Head of caudate nucleus (tissue), 42 donors: ENCODE measurements at regions of chr7 and their contacts with region 1.

Region 1: DNA sequence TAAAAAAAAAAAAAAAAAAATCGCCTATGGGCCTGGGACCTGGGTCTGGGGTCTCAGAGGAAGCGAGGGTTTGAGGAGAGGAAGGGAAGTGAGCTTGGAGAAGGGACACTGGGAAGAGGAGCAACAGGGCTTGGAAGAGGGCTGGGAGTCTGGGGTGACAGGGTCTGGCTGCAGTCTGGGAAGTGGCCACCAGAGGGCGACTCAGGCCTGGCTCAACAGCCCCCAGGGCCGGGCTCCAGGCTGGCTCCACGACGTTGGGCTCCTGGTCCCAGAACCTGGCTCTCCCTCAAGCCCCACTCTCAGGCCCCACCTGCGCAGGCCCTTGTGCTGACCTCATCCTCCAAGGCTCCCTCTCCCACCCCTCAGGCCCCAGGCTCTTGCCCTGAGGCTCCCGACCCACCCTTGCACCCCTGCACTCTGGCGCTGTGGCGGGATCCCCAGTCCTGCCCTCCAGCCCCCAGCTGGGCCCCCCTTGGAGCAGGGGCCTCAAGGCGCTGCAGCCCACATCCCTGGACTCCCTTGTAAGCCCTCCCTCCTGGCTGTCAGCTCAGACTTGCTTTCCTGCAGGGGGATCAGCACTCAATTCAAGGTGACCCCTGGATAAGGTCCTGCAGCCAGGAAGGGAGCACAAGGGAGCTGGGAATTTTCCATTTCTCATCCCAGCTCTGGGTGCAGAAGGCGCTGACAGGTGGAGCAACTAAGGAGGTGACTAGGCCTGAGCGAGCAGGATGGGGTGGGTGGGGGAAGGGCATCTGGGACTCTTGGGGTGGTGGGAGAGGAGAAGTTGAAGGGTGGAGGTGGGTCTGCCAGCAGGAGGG is 5.4 kb upstream of the SPACDR start:
- DNase-seq: peak; percentile 77 to 98 (median 92)

Region 2: GRCh38 chr7:100380196-100380595 is 89.2 kb before region 1 on chr7:
- intact Hi-C with region 1: no loop called
- DNase-seq: no peak

Region 3: DNA sequence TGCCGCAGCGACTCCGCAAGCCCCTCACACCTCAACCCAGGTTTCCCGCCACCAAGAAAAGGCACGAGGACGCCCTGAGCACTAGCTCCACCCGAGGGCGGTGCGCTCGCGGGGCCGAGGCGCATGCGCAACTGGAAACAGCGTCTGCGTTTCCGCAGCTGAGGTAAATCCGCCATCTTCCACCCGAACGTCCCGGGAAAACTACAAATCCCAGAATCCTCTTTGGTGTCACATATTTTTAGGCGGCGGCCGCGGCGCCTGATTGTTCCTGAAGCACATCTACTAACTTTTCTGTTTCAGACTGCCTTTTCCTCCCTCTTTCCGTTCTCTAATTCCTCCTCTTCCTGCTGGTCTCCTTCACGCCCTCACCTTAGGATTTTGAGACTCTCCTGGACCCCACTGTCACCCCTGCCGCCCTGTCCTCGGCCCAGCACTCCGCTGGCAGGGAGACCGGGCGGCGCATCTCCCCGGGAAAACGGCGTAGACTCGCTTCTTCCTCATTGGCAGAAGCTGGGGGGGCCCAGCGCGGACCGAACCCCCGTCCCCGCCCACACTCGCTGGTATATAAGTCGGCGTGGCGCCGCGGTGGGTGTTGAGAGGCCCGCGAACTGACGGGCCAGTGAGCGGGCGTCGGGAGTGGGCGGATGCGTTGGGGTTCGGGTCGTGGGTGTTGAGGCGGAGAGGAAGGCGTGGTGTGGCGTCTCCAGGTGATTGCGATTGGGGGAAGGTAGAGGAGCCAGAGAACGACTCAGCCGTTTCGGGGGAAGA is 41.1 kb before region 1 on chr7 and contains the start of gene ZCWPW1:
- intact Hi-C with region 1: loop called (anchors 2 kb)
- DNase-seq: peak; percentile 90 to 98 (median 96)